Sigmoid colon (tissue), 7 donors: ENCODE measurements at regions of chr3 and their contacts with region 1.

Region 1: GRCh38 chr3:170180908-170181879 is at the start of gene PHC3:
- DNase-seq: peak; percentile 96
- H3K4me3 ChIP-seq: peak within 1 kb of the TSS; percentile 67 to 99 (median 80)
- H3K27ac ChIP-seq: peak within 1 kb of the TSS; percentile 90 to 100 (median 95)
- H3K4me1 ChIP-seq: peaks cover 0 to 27% (median 19%) of the 10 kb centered on the region in 4 donors
- H3K27me3 ChIP-seq: no peaks in the 10 kb centered on the region
- CTCF ChIP-seq: peak in 1 of 4 experiments; percentile 12
- EP300 ChIP-seq: no peak
- POLR2A ChIP-seq: peak; percentile 74 to 84
- total RNA-seq, gene PHC3: 56.4 to 85.9 (median 70.3) TPM

Region 2: GRCh38 chr3:169954142-169954756 is 226.9 kb before region 1 on chr3:
- intact Hi-C with region 1: no loop called
- DNase-seq: no peak
- H3K4me3 ChIP-seq: no peak overlapping the region
- H3K27ac ChIP-seq: no peak overlapping the region
- H3K4me1 ChIP-seq: no peaks in the 10 kb centered on the region
- H3K27me3 ChIP-seq: no peaks in the 10 kb centered on the region
- CTCF ChIP-seq: no peak
- EP300 ChIP-seq: no peak
- POLR2A ChIP-seq: no peak

Region 3: DNA sequence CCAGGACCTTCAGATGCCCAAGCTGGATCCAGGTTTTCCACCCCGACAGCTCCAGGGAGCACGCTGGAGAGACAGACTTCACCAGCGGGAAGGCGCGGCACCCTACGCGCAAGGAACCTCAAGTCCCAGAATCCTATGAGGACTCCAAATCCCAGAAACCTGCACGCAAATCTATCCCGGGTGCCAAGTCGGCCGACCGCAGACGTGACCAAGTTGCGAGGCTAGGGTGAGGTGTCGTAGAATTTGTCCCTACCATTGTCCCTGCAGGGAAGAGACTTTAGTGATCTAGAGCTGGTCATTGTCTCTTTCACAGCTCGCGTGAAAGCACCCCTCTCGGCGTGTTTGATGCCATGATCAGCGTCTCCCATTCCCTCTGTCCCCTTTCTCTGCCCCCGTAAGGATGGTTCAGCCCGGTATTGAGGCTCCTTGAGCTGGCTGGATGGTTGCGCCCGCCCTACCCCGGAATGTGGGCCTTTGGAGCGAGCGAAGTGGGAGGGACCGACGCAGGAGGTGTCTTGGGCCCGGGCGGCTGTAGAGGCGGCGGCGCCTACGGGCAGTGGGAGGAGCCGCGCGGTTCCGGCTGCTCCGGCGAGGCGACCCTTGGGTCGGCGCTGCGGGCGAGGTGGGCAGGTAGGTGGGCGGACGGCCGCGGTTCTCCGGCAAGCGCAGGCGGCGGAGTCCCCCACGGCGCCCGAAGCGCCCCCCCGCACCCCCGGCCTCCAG is 40.9 kb after region 1 on chr3 and contains the start of gene PRKCI:
- intact Hi-C with region 1: loop called (anchors 2 kb)
- DNase-seq: peak; percentile 97
- H3K4me3 ChIP-seq: peak within 1 kb of the TSS; percentile 83 to 99 (median 90)
- H3K27ac ChIP-seq: peak within 1 kb of the TSS; percentile 90 to 94 (median 91)
- H3K4me1 ChIP-seq: peaks cover 0 to 23% (median 9%) of the 10 kb centered on the region in 4 donors
- H3K27me3 ChIP-seq: no peaks in the 10 kb centered on the region
- CTCF ChIP-seq: no peak
- EP300 ChIP-seq: no peak
- POLR2A ChIP-seq: peak; percentile 35 to 38
- total RNA-seq, gene PRKCI: 23.9 to 33.2 (median 28.1) TPM

Region 4: GRCh38 chr3:170483485-170484262 is 302.5 kb after region 1 on chr3:
- intact Hi-C with region 1: no loop called
- DNase-seq: no peak
- H3K4me3 ChIP-seq: no peak overlapping the region
- H3K27ac ChIP-seq: no peak overlapping the region
- H3K4me1 ChIP-seq: no peaks in the 10 kb centered on the region
- H3K27me3 ChIP-seq: peaks cover 0 to 2% (median 0%) of the 10 kb centered on the region in 3 donors
- CTCF ChIP-seq: no peak
- EP300 ChIP-seq: no peak
- POLR2A ChIP-seq: no peak